HEK293 (cell line): ENCODE measurements at regions of chr9 and their contacts with region 1.

Region 1: DNA sequence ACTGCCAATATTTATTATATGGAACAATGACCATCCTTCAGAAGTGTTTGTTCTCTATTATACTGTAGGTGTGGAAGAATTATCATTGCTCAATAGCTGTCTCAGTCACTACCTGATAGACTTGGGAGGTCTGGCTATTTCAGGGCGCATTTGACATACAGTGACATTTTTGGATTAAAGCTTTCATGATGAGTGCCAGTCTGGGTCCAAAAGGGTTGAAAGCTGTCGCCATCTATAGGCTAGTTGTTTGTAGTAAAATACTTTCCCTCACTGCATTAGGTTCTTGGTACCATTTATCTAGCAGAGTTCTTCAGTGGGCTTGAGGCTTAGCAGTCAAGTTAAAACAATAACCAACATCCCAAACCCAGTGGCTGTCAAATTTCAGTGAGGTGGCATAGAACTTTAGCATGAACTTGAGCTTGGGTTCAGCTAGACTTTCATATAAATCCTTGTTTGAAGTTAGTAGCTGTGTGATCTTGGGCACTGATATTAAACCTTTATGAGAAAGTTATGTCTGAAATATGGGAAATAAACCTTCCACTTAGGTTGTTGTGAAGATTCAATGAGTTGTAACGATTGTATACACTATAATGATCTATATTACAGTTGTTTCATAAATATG is 110.5 kb upstream of the CDKN2B start:
- H3K4me3 ChIP-seq: no peak overlapping the region
- H3K27ac ChIP-seq: no peak overlapping the region
- H3K4me1 ChIP-seq: peaks cover 14% of the 10 kb centered on the region; the same call in 1 of the 2 replicates
- CTCF ChIP-seq: no peak

Region 2: DNA sequence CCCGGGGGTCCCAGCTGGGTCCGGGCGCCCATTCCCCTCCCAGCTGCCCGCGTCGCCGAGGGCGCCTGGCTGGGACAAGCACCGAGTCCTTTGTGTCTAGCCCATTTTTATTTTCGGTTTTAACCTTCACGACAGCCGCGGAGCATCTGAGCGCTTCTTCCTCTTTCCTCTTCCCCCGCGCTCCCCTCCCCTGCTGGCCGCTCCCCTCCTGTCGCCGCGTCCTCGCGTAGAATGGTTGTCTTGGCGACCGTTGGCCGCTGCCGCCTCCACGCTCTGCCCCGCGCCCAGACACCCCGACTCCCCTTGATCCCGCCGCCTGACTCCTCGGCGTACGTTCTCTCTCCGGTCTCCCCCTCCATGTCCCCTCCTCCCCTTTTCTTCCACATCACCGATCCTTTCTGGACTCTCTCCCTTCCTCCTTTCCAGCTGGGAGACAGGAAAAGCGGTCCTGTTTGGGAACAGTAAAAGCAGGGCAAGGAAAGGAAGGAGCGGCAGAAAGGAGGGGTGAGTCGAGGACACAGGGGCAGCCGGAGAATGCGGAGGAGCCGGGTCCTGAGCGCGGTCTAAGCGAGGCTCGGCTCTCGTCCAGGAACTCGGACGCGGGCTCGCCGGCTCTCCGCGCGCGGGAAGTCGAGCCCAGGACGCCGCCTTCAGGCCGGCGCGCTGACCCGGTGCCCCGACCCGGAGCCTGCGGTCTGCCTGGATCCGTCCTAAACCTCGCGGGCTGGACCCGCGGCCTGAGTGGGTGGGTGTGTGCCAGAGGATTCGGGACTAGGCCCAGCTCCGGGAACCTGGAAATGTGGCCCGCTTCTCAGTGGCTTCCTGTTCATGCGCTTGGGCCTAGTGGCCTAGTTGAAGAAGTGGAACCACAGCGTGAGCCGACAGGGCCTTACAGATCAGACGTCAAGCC is 124.2 kb before region 1 on chr9:
- CTCF ChIA-PET with region 1: interaction called, 4 read pairs
- POLR2A ChIA-PET with region 1: interaction called, 11 read pairs
- H3K4me3 ChIP-seq: peak overlapping the region; percentile 59
- H3K27ac ChIP-seq: peak overlapping the region; percentile 99
- H3K4me1 ChIP-seq: peaks cover 5% of the 10 kb centered on the region; the same call in 1 of the 2 replicates
- CTCF ChIP-seq: no peak

Region 3: GRCh38 chr9:22037954-22038690 is 81.5 kb before region 1 on chr9:
- CTCF ChIA-PET with region 1: interaction called, 48 read pairs
- POLR2A ChIA-PET with region 1: no interaction called
- H3K4me3 ChIP-seq: no peak overlapping the region
- H3K27ac ChIP-seq: no peak overlapping the region
- H3K4me1 ChIP-seq: peaks cover 10% of the 10 kb centered on the region; the same call in 1 of the 2 replicates
- CTCF ChIP-seq: no peak

Region 4: DNA sequence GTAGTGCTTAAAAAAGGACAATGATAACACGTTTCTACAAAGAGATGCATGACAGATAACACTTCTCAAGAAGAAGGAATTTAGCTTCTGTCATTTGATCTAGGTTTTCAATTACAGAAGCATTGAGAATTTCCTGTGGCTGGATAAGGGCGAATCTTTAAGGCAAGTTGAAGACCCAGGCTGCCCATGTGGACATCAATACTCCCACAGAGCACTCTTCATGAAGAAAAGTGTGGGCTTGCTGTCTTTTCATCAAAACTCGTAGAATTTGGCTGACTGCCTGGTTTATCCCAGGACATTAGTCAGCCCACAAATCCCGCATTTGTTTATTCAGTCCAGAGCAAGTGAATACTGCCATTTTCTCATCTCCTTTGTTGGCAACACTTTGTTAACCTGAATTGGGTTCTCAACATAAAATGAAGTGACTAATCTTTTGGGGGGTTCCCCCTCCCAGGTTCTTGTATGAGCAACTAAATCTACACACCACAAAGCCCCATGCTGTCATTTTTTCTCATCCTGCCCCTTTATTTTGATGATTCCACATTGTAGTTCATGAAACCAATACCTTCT is 67.2 kb before region 1 on chr9:
- CTCF ChIA-PET with region 1: interaction called, 10 read pairs
- POLR2A ChIA-PET with region 1: interaction called, 5 read pairs
- H3K4me3 ChIP-seq: no peak overlapping the region
- H3K27ac ChIP-seq: peak overlapping the region; percentile 64
- H3K4me1 ChIP-seq: peaks cover 15% of the 10 kb centered on the region
- CTCF ChIP-seq: no peak

Region 5: DNA sequence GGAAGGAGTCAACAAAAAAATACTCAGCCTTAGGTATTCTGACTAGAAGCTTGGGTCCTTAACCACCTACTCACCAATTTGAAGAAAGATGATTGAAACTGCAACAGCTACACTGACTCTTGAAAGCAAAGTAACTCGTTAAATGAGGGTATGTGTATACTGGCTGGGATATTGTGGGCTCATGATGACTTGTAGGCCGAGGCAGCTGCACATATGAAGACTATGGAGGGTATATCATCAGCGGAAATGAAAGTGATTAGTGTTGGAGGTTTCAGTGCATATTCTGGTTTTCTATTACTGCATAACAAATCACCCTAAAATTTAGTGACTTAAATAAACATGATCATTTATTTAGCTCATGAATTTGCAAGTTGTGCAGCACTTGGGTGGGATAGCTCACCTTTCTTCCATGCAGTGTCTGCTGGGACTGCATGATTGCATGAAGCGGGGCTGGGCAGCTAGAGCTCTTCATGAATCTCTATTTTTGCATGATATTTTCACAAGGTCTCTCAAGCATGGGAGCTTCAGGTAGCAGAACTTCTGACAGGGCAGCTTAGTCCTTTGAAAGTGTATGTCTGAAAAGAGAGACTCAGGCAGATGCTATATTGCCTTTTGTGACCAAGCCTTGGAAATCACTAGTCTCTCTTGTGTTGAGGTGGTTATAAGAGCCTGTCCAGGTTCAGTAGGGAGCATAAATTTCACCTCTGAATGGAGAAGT is 14.5 kb before region 1 on chr9:
- CTCF ChIA-PET with region 1: interaction called, 70 read pairs
- POLR2A ChIA-PET with region 1: interaction called, 9 read pairs
- H3K4me3 ChIP-seq: no peak overlapping the region
- H3K27ac ChIP-seq: no peak overlapping the region
- H3K4me1 ChIP-seq: peaks cover 8% of the 10 kb centered on the region; the same call in 1 of the 2 replicates
- CTCF ChIP-seq: no peak

Region 6: GRCh38 chr9:22278426-22278825 is 158.8 kb after region 1 on chr9:
- CTCF ChIA-PET with region 1: no interaction called
- POLR2A ChIA-PET with region 1: no interaction called
- H3K4me3 ChIP-seq: no peak overlapping the region
- H3K27ac ChIP-seq: no peak overlapping the region
- H3K4me1 ChIP-seq: no peaks in the 10 kb centered on the region
- CTCF ChIP-seq: no peak

Region 7: DNA sequence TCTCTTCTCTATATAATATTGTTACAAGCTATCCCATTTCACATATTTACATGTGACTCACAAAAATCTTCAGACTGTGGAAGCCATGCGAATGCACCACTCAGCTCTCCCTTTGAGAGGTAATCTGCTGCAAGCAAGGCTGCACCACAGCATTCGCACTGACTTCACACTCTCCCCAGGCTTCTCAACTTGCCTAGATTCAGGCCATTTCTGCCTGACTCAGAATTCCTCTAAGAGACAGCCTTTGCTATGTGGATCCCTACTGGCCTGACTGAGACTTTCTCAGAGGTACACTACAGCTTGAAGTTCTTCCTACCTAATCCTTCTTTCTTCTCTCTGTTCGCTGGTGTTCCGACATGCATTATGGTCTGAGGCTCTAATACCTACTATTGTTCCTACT is 305.9 kb after region 1 on chr9:
- CTCF ChIA-PET with region 1: no interaction called
- POLR2A ChIA-PET with region 1: no interaction called
- H3K4me3 ChIP-seq: no peak overlapping the region
- H3K27ac ChIP-seq: no peak overlapping the region
- H3K4me1 ChIP-seq: no peaks in the 10 kb centered on the region
- CTCF ChIP-seq: no peak